Ascending aorta (tissue), 2 donors: ENCODE measurements at regions of chr9 and their contacts with region 1.

Region 1: DNA sequence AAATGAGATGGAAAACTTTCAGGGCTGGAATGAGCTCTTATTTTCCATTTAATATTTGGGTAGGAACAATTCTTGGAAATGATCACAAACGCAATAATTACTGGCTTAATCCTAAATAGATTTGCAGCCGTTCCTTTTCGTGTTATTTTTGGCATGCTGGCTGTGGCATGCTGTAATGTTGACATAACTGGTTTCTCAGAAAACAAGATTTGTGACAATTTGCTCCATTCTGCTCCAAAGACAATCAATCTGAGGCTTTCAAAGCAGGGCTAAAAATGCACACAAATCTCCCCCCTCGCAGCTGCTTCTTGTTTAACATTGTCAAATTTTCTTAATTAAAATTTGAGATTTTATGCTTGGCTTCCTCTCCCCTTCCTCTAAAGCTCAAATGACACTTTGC is 151.2 kb downstream of the TTC39B start:
- DNase-seq: peak in 1 of 2 donors; percentile 88
- H3K4me3 ChIP-seq: no peak overlapping the region
- H3K27ac ChIP-seq: peak overlapping the region; percentile 93 to 95
- H3K4me1 ChIP-seq: peaks cover 32 to 64% of the 10 kb centered on the region in 2 donors
- H3K27me3 ChIP-seq: no peaks in the 10 kb centered on the region
- CTCF ChIP-seq: no peak

Region 2: DNA sequence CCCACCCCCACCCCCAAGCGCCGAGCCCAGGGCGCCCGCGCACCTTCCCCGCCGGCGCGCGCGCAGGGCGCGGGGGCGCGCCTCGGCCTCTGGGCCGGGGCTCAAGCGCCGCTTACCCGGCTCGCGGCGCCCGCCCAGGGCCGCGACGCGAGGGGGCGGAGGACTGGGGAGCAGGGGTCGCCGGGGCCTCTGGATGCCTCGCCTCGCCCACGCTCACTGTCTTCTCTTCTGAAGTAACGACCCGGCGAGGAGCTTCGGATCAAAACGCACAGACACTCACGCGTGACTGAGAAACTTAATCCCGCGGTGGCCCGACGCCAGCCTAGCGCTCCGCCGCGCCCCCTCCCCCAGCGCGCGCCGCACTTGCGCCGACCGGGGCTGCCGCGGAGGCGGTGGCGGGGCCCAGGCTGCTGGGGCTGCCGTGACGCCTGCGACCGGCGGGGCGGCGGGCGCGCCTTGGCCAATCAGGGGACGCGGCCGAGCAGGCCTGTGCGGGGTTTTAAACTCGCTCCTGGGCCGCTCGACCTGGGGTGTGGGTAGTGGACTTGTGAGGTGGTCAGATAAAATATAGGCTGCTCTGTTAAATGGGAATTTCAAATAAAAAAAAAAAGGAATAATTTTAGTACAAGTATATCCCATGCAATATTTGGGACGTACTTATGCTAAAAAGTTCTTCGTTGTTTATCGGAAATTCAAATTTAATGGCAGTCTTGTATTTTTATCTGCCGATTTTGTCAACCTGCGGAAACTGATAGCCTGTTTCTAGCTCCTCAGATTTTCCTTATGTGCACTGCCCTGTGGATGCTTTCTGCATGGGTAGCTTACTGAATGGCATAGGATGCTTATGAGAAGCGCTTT is 1876.3 kb before region 1 on chr9 and contains the start of gene MPDZ:
- intact Hi-C with region 1: loop called (anchors 5 kb)
- DNase-seq: peak in 1 of 2 donors; percentile 85
- H3K4me3 ChIP-seq: peak within 1 kb of the TSS; percentile 72 to 86
- H3K27ac ChIP-seq: peak within 1 kb of the TSS; percentile 86 to 93
- H3K4me1 ChIP-seq: peaks cover 5 to 8% of the 10 kb centered on the region in 2 donors
- H3K27me3 ChIP-seq: no peaks in the 10 kb centered on the region
- CTCF ChIP-seq: peak in 1 of 3 experiments; percentile 25
- total RNA-seq, gene MPDZ: 46.2 TPM

Region 3: DNA sequence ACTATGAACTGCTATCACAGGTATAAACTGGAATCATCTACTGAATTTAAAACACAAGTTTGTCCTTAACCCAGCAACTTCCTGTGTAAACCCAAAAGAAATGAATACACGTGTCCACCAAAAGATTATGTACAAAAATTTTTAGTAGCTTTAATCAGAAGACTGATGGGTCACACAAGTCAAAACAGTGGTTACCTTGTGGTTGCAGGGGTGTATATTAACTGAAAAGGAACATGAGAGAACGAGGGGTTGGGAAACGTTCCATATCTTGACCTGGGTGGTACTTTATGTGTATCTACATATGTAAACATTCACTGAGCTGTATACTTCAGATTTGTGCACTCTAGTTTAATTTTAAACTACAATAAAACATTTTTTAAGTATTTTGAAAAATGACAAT is 481.2 kb before region 1 on chr9:
- intact Hi-C with region 1: no loop called
- DNase-seq: no peak
- H3K4me3 ChIP-seq: no peak overlapping the region
- H3K27ac ChIP-seq: no peak overlapping the region
- H3K4me1 ChIP-seq: no peaks in the 10 kb centered on the region
- H3K27me3 ChIP-seq: no peaks in the 10 kb centered on the region
- CTCF ChIP-seq: no peak

Region 4: DNA sequence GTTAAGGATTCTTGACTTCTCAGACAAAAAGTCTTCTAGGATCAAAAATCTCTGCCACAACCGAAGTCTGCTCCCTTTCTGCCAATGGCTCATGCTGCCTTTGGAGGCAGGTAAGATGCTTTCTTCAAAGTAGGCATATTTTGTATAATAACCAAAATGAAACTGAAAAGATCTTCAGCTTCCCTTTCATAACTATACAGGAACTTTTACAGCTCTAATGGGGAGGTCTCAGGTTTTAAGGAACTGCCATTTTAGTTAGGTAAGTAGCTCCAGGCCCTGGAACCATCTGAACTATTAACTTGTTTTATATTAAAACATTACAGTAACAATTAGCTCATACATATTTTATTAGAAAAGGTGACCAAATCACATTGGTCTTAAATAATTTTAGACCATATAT is 134.7 kb before region 1 on chr9:
- intact Hi-C with region 1: no loop called
- DNase-seq: no peak
- H3K4me3 ChIP-seq: no peak overlapping the region
- H3K27ac ChIP-seq: no peak overlapping the region
- H3K4me1 ChIP-seq: no peaks in the 10 kb centered on the region
- H3K27me3 ChIP-seq: no peaks in the 10 kb centered on the region
- CTCF ChIP-seq: no peak

Region 5: DNA sequence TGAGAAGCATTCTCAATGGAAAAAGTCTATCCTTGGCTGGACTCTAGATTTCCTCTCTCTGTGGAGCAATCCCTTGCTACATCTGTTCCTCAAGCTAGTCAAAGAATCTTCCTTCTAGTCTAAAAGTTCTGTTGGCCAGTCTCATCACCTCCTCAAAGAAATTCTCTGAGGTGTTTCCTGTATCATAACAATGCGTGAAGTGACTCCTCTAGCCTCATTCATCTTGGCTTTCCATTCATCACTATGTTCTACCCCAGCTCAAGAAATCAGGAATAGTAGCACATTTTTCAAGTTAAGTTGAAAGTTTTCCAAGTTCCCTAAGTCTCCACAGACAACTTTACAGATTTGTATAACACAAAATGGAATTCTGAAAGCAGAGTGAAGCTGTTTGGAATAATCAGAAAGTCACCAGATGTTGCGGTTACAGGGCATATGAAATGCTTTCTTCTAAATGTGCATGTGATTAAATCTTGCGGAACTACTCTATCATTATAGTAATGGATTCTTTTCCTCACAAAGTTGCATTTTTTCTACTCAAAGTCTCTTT is 69.0 kb before region 1 on chr9:
- intact Hi-C with region 1: no loop called
- DNase-seq: no peak
- H3K4me3 ChIP-seq: no peak overlapping the region
- H3K27ac ChIP-seq: no peak overlapping the region
- H3K4me1 ChIP-seq: no peaks in the 10 kb centered on the region
- H3K27me3 ChIP-seq: no peaks in the 10 kb centered on the region
- CTCF ChIP-seq: no peak

Region 6: DNA sequence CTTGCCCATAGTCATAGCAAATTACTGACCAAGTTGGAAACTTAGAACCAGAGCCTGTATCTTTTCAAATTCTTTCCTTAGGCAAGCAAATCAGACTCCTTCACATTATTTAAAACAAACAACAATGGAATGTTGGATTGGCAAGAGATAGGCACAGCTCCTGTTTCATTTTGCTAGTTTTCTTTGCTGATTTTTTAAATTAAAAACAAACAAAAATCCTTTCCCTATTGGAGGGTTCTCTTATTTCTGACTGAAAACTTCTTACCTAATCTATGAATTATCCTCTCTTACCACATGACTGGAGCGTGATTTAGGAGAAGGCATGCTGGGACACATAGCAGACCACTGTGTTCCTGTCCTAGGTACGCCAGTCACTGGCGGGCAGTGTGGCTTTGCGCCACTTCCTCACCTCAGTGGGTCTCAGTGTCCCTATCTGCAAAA is 88.2 kb after region 1 on chr9:
- intact Hi-C with region 1: loop called (anchors 5 kb)
- DNase-seq: no peak
- H3K4me3 ChIP-seq: peak overlapping the region in 1 of 2 donors; percentile 34
- H3K27ac ChIP-seq: peak overlapping the region; percentile 80
- H3K4me1 ChIP-seq: peaks cover 4 to 47% of the 10 kb centered on the region in 2 donors
- H3K27me3 ChIP-seq: no peaks in the 10 kb centered on the region
- CTCF ChIP-seq: no peak

Region 7: DNA sequence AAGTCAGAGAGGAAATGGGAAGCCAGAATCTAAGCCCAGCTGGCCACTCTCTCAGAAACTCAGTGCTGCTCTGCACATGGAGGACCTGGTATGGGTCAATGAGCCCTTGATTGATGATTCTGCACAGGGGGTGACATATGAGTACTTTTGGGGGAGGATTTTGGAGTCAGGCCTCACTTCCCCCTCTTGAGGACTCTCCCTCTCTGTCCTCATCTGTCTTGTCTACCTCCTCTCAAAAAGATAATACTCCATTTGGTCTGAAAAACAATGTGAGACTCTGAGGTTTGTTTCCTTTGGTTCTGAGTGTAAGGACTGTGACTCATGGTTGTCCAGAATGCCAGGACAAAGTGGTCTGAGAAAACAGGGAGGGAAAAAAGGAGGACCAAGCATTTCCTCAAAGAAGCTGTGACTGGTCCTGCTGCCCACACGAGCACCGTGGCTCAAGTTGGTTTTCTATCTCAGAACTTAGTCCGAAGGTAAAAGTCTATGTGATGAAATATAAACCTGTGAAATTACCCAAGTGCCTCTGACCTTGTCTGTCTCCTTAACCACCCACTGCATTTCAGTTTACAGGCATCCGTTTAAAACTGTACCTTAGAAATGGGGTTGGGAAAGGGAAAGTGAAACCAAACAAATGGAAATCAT is 140.1 kb after region 1 on chr9:
- intact Hi-C with region 1: loop called (anchors 5 kb)
- DNase-seq: no peak
- H3K4me3 ChIP-seq: peak overlapping the region; percentile 64 to 68
- H3K27ac ChIP-seq: peak overlapping the region; percentile 88 to 92
- H3K4me1 ChIP-seq: peaks cover 10 to 33% of the 10 kb centered on the region in 2 donors
- H3K27me3 ChIP-seq: no peaks in the 10 kb centered on the region
- CTCF ChIP-seq: no peak

Region 8: DNA sequence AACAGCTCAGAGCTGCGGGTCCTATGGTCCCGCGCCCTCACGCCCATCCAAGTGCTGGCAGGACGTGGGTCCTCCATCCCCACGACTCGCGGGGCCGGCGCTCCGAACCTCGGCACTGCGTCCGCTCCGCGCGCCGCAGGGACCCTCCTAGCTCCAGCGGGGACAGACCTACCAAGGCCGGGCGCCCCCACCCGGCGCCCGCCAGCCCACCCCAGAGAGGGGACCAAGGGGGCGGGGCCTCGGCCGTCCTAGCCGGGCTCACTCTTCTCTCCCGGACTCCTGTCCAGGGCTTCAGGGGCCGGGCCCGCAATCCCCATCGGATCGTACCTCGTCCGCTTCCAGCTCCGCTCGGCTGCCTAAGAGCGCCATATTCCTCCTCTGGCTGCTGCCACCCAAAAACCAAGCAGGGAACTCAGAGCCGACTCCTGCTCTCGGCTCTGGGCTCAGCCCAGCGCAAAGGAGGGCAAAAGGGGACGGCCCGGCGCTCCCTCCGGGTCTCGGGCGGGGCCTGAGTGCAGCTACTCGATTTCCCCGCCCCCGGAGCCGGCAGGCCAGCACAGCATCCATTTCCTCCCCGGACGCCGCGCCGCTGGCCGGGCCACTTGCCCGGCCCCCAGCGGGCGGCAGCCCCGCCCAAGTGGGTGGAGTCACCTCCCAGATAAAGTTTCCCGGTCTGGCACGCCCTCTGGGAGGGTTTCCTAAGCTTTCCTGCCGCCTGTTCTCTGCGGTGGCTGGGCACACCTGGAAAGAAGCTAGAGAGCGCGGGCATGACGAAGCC is 151.1 kb after region 1 on chr9 and contains the start of gene TTC39B:
- intact Hi-C with region 1: loop called (anchors 5 kb)
- DNase-seq: peak; percentile 71 to 97
- H3K4me3 ChIP-seq: peak within 1 kb of the TSS; percentile 82 to 97
- H3K27ac ChIP-seq: peak within 1 kb of the TSS; percentile 89 to 91
- H3K4me1 ChIP-seq: peaks cover 3 to 4% of the 10 kb centered on the region in 2 donors
- H3K27me3 ChIP-seq: no peaks in the 10 kb centered on the region
- CTCF ChIP-seq: peak in 1 of 3 experiments; percentile 2
- total RNA-seq, gene TTC39B: 2.7 TPM

Region 9: GRCh38 chr9:15510789-15511575 is 355.2 kb after region 1 on chr9 and contains the start of gene PSIP1:
- intact Hi-C with region 1: loop called (anchors 5 kb)
- DNase-seq: peak in 1 of 2 donors; percentile 80
- H3K4me3 ChIP-seq: peak within 1 kb of the TSS; percentile 72 to 94
- H3K27ac ChIP-seq: peak within 1 kb of the TSS; percentile 92 to 95
- H3K4me1 ChIP-seq: peaks cover 0 to 4% of the 10 kb centered on the region in 2 donors
- H3K27me3 ChIP-seq: no peaks in the 10 kb centered on the region
- CTCF ChIP-seq: peak in 2 of 3 experiments; percentile 7 to 36
- total RNA-seq, gene PSIP1: 115 TPM

Region 10: DNA sequence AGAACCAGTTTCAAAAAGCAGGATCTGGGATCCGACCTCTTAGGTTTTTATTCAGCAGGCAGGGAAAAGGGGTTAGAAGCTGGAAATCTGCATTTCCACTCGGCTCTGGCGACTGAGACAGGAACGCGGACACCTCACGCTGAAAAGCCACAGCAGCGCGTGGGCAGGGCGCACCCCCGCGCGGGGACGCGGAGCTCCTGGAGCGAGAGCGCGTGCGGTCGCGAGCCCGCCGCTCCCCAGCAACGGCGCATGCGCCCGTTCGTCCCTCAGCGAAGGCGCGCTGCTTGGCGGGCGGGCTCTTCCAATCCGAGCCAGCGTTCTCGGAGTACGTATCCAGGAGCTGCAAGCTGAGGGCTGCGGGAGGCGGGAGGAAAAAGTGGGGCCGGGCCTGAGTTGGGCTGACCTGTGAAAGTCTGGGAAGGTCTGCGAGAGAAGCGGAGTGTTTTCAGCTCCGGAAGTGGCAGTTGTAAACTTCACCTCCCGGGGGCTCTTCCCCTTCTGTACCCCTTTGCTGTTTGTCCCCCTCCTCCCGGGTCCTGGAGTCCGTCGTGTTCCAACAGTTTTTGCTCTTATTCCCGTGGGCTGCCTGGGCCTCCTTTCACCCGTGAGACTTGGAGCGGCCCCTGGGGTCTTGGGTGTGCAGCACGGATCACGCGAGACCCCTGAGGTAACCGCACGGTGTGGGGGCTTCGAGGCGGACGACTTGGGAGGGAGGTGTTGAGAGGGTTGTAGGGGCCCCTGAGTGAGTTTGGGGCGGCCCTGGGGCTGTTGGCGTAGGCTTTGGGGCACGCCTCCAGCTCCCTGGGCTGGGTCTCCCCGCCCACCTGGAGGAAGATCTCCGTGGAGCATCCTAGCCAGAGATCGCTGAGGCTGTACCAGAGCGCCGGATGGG is 397.1 kb after region 1 on chr9 and contains the start of gene CCDC171:
- intact Hi-C with region 1: loop called (anchors 5 kb)
- DNase-seq: peak; percentile 72 to 95
- H3K4me3 ChIP-seq: peak within 1 kb of the TSS; percentile 74 to 75
- H3K27ac ChIP-seq: peak within 1 kb of the TSS; percentile 78 to 84
- H3K4me1 ChIP-seq: peaks cover 0 to 5% of the 10 kb centered on the region in 2 donors
- H3K27me3 ChIP-seq: no peaks in the 10 kb centered on the region
- CTCF ChIP-seq: peak in 1 of 3 experiments; percentile 7
- total RNA-seq, gene CCDC171: 1.7 TPM

Region 11: DNA sequence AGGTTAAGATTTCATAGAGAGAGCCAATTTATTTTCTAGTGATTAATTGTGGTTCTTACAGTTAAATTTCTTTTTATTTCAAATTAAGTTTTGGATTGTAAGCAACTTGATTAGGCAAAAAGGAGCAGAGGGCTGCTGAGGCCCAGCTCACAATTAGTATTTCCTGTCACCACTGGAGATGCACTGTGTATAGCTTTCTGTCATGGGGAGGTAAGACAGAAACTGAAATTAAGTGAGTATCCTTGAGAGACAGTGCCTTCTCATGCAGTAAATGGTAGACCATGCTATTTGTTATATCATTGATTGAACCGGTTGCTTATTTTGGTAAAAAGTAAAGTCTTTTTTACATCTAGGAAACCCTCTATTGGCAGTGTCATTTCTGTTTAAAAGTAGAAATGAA is 587.7 kb after region 1 on chr9:
- intact Hi-C with region 1: no loop called
- DNase-seq: no peak
- H3K4me3 ChIP-seq: no peak overlapping the region
- H3K27ac ChIP-seq: no peak overlapping the region
- H3K4me1 ChIP-seq: no peaks in the 10 kb centered on the region
- H3K27me3 ChIP-seq: no peaks in the 10 kb centered on the region
- CTCF ChIP-seq: no peak